Activated T-helper 1 cell treated with anti-CD3 and anti-CD28 coated beads, Interleukin-12 subunit alpha, Interleukin-12 subunit beta, Interleukin-2, Interleukin-4 antibody, amounts not matched to agents 30 ng/mL and 10 ng/mL and 1 ng/mL, durations not matched to agents 14 hours and 24 hours and 36 hours (primary cell): ENCODE measurements at regions of chr16 and their contacts with region 1.

Region 1: DNA sequence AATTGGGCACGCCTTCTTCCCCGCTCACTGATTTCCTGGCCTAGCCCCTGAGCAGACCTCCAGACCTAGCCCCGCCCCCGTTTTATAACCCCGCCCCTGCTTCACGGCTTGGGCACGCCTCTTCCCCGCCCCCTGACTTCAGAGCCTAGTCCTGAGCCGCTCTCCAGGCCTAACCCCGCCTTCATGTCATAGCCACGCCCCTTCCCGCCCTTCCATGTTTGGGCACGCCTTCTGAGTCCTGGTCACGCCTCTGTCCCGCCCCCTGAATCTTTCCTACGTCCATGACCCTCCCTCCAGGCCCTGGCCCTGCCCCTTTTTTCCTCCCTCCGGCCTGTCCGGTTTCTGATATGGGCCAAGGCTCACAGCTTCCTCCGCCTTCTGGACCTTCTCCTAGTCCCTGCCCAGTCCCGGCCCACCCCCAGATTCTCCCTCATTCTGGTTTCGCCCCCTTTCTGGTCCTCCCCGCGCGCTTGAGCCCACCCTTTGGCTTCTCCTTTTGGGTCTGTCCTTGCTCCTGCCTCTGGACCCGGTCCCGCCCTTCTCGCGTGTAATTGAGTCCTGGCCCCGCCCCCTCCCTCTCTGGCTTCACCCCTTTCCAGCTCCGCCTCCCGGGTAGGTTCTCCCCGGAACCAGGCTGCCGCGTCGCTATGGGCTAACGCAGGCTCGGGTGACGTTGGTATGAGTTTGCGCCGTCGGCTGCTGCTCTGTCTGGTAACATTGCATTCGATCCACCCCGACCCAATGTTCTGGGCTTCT is 15.1 kb upstream of the EEF2K start:
- DNase-seq: peak; percentile 94
- H3K4me3 Mint-ChIP-seq: peak overlapping the region; percentile 88
- H3K27ac Mint-ChIP-seq: peak overlapping the region; percentile 99
- H3K4me1 Mint-ChIP-seq: peaks cover 68% of the 10 kb centered on the region
- H3K27me3 Mint-ChIP-seq: peaks cover 4% of the 10 kb centered on the region

Region 2: GRCh38 chr16:21599233-21600030 is 591.5 kb before region 1 on chr16 and contains the start of gene METTL9:
- intact Hi-C with region 1: loop called (anchors 2 kb)
- DNase-seq: peak; percentile 95
- H3K4me3 Mint-ChIP-seq: peak within 1 kb of the TSS; percentile 96
- H3K27ac Mint-ChIP-seq: peak within 1 kb of the TSS; percentile 87
- H3K4me1 Mint-ChIP-seq: peaks cover 55% of the 10 kb centered on the region
- H3K27me3 Mint-ChIP-seq: peaks cover 3% of the 10 kb centered on the region
- total RNA-seq, gene METTL9: 58.8 and 64.9 TPM in 2 replicates

Region 3: GRCh38 chr16:22001591-22001990 is 189.4 kb before region 1 on chr16:
- intact Hi-C with region 1: loop called (anchors 1 kb)
- DNase-seq: no peak
- H3K4me3 Mint-ChIP-seq: no peak overlapping the region
- H3K27ac Mint-ChIP-seq: no peak overlapping the region
- H3K4me1 Mint-ChIP-seq: peaks cover 19% of the 10 kb centered on the region
- H3K27me3 Mint-ChIP-seq: peaks cover 9% of the 10 kb centered on the region

Region 4: GRCh38 chr16:22098405-22099255 is 92.3 kb before region 1 on chr16:
- intact Hi-C with region 1: loop called (anchors 5 kb)
- DNase-seq: peak; percentile 8
- H3K4me3 Mint-ChIP-seq: no peak overlapping the region
- H3K27ac Mint-ChIP-seq: no peak overlapping the region
- H3K4me1 Mint-ChIP-seq: no peaks in the 10 kb centered on the region
- H3K27me3 Mint-ChIP-seq: peaks cover 19% of the 10 kb centered on the region

Region 5: DNA sequence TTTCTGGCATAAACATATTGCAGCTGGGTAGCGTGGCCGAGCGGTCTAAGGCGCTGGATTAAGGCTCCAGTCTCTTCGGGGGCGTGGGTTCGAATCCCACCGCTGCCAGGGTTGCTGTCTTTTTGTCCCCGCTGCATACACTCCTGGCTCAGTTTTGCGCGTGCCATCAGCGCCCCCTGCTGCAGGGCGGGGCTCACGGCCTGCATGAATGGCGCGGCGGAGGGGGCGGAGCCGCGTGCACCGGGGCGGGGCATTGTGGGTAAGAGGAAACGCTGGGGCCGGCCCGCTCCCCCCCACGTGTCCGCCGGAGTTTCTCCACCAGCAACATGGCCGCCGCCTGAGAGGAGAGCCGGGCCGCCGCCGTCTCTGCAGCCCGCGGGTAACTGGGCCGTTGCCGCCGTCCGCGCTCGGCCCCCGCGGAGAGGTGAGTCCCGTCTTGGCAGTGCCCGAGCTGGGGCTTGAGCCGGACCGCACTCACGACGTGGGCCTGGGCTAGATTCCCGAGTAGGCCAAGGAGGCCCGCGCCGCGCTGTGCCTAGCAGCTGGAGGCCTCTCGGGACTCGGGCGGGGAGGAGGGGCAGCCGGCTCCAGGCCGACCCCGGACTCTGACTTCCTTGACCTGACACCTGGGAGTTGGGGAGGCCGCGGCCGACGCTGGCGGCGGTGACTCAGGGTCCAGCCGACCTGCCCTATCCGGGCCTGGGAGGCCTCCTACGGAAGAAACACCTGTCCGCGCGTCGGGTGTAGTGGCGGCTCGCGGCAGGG is 106.3 kb after region 1 on chr16 and contains the start of gene POLR3E:
- intact Hi-C with region 1: loop called (anchors 1 kb)
- DNase-seq: peak; percentile 100
- H3K4me3 Mint-ChIP-seq: peak within 1 kb of the TSS; percentile 94
- H3K27ac Mint-ChIP-seq: peak within 1 kb of the TSS; percentile 90
- H3K4me1 Mint-ChIP-seq: peaks cover 45% of the 10 kb centered on the region
- H3K27me3 Mint-ChIP-seq: peaks cover 3% of the 10 kb centered on the region
- total RNA-seq, gene POLR3E: 107 and 111 TPM in 2 replicates